ENCODE measurements at regions of chr17 and their contacts with region 1.

Region 1: GRCh38 chr17:44218344-44219107 is 949 bp downstream of the UBTF start:
- DNase-seq: peak; percentile 90 to 95 (median 92)
- ATAC-seq: peak; percentile 68 to 81 (median 73)
- H3K4me3 ChIP-seq: peak overlapping the region; percentile 76 to 100 (median 96)
- H3K27ac ChIP-seq: peak overlapping the region; percentile 97 to 100 (median 100)
- H3K4me1 ChIP-seq: peaks cover 4 to 44% (median 37%) of the 10 kb centered on the region in 12 donors
- H3K27me3 ChIP-seq: no peaks in the 10 kb centered on the region
- CTCF ChIP-seq: peak; percentile 57 to 88 (median 71)
- POLR2A ChIP-seq: peak in 1 of 2 donors; percentile 62

Region 2: GRCh38 chr17:44199553-44200477 is 18.7 kb before region 1 on chr17 and contains the start of gene ATXN7L3:
- intact Hi-C with region 1: loop called in 2 of 10 experiments (anchors 1 kb)
- DNase-seq: peak; percentile 99 to 100 (median 100)
- ATAC-seq: peak; percentile 91 to 96 (median 94)
- H3K4me3 ChIP-seq: peak within 1 kb of the TSS; percentile 55 to 99 (median 91)
- H3K27ac ChIP-seq: peak within 1 kb of the TSS; percentile 96 to 100 (median 98)
- H3K4me1 ChIP-seq: peaks cover 0 to 40% (median 17%) of the 10 kb centered on the region in 12 donors
- H3K27me3 ChIP-seq: no peaks in the 10 kb centered on the region
- CTCF ChIP-seq: no peak
- POLR2A ChIP-seq: peak in 1 of 2 donors; percentile 35
- total RNA-seq, gene ATXN7L3: 24.1 to 51.9 (median 35.3) TPM

Region 3: GRCh38 chr17:44258811-44259351 is 40.4 kb after region 1 on chr17:
- intact Hi-C with region 1: no loop called
- DNase-seq: no peak
- ATAC-seq: no peak
- H3K4me3 ChIP-seq: no peak overlapping the region
- H3K27ac ChIP-seq: no peak overlapping the region
- H3K4me1 ChIP-seq: no peaks in the 10 kb centered on the region
- H3K27me3 ChIP-seq: no peaks in the 10 kb centered on the region
- CTCF ChIP-seq: no peak
- POLR2A ChIP-seq: no peak

Region 4: GRCh38 chr17:44269535-44270240 is 51.2 kb after region 1 on chr17:
- intact Hi-C with region 1: loop called in 7 of 10 experiments (anchors 5 to 10 kb)
- DNase-seq: no peak
- ATAC-seq: no peak
- H3K4me3 ChIP-seq: no peak overlapping the region
- H3K27ac ChIP-seq: no peak overlapping the region
- H3K4me1 ChIP-seq: peaks cover 0 to 19% (median 12%) of the 10 kb centered on the region in 12 donors
- H3K27me3 ChIP-seq: no peaks in the 10 kb centered on the region
- CTCF ChIP-seq: no peak
- POLR2A ChIP-seq: no peak

Region 5: DNA sequence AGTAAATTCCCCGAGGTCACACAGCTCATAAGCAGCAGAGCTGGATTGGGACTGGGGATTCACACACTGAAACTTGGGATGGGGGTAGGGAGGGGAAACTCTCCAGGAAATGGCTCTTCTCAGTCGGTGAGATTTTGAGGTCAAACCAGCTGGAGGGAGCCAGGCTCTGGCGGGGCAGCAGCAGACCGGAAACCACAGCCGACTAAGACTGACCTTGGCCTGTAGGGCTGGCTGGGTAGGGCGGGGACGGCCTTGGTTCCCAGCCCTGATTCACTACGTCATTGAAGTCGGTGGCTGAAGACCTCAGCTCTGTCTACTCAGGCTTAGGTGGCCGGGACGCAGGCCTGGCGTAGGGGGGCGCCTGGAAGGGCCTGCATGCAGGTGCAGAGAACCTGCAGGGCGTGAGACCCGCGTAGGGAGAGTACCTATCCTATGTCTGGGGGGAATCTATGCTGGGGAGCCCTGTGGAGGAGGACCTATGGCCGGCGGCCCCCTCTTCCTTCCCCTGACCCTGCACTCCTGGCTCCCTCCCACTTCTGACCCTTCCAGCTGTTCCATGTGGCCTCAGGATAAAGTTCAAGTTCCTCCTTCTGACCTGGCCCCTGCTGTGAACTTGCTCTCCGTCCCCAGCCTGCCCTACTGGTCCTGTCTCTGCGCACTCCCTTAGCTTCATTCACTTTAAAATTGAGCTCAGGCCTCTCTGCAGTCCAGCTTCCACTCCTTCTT is 61.3 kb after region 1 on chr17:
- intact Hi-C with region 1: loop called in 6 of 10 experiments (anchors 10 kb)
- DNase-seq: peak; percentile 86 to 90 (median 88)
- ATAC-seq: peak; percentile 91 to 99 (median 98)
- H3K4me3 ChIP-seq: peak overlapping the region in 1 of 12 donors; percentile 28
- H3K27ac ChIP-seq: peak overlapping the region in 11 of 12 donors; percentile 51 to 89 (median 77)
- H3K4me1 ChIP-seq: peaks cover 0 to 23% (median 16%) of the 10 kb centered on the region in 12 donors
- H3K27me3 ChIP-seq: no peaks in the 10 kb centered on the region
- CTCF ChIP-seq: no peak
- POLR2A ChIP-seq: no peak

Region 6: DNA sequence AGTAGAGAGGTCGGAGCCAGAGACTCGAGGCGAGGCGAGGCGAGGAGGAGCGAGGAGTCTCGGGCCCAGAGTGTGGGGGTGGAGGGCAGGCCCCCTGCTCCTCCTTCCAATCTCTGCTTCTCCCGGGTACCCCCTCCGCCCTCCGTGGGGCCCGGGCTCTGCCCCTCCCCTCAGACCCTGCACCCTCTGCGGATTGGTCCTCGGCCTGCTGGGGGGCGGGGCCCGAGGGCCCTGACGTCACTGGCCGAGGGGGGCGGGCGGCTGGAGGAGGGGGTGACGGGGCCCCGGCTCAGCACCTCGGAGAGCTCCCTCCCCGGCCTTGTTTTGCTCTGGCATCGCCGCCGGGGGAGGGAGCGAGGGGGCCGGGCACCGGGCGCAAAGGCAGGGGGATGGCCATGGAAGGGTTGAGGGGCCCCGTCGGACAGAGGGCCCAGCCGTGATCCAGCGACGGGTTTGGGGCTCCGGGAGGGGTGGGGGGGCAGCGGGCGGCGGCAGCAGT is 89.8 kb after region 1 on chr17 and contains the start of gene RUNDC3A:
- intact Hi-C with region 1: loop called in 1 of 10 experiments (anchors 5 kb)
- DNase-seq: peak; percentile 88 to 92 (median 89)
- ATAC-seq: peak; percentile 95 to 99 (median 98)
- H3K4me3 ChIP-seq: peak within 1 kb of the TSS; percentile 27 to 62 (median 53)
- H3K27ac ChIP-seq: peak within 1 kb of the TSS in 4 of 12 donors; percentile 1 to 84 (median 37)
- H3K4me1 ChIP-seq: peaks cover 0 to 20% (median 16%) of the 10 kb centered on the region in 12 donors
- H3K27me3 ChIP-seq: peaks cover 0 to 24% (median 7%) of the 10 kb centered on the region in 9 donors
- CTCF ChIP-seq: no peak
- POLR2A ChIP-seq: no peak
- total RNA-seq, gene RUNDC3A: 0.27 to 1.3 (median 0.57) TPM in 8 of 9 donors, not detected in the other

Region 7: DNA sequence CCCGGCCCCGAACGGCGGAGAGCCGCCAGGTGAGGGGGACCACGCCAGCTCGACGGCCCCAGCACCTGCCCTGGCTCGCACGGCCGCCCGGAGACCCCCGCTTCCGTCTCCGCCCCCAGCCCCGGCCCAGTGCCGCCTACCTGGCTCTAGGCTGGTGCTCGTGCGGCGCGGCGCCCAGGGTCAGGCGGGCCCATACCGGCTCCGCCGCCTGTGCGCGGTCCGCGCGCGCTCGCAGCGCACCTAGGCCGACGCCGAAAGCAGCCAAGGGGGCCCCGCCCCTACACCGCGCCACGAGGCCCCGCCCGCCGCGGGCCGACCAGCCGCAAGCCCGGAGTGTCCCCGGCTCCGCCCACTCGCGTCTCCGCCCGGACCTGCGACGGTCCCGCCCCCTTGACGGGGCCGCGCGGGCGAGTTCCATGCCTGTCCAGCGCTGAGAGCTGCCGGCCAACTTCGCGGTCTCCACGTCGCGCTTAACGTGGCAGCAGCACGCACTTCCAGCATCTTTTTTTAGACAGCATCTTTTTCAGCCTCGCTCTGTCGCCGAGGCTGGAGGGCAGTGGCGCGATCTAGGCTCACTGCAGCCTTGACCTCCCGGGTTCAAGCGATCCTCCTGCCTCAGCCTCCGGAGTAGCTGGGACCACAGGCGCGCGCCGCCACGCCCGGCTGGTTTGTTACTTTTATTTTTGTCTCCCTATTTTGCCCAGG is 106.2 kb after region 1 on chr17 and contains the start of gene SLC25A39:
- intact Hi-C with region 1: loop called in 8 of 10 experiments (anchors 1 to 5 kb)
- DNase-seq: peak; percentile 95 to 99 (median 97)
- ATAC-seq: peak; percentile 86 to 92 (median 90)
- H3K4me3 ChIP-seq: peak within 1 kb of the TSS; percentile 82 to 99 (median 94)
- H3K27ac ChIP-seq: peak within 1 kb of the TSS; percentile 58 to 98 (median 95)
- H3K4me1 ChIP-seq: peaks cover 5 to 38% (median 22%) of the 10 kb centered on the region in 12 donors
- H3K27me3 ChIP-seq: no peaks in the 10 kb centered on the region
- CTCF ChIP-seq: no peak
- POLR2A ChIP-seq: peak in 1 of 2 donors; percentile 81
- total RNA-seq, gene SLC25A39: 37.2 to 78.5 (median 49.7) TPM

Region 8: DNA sequence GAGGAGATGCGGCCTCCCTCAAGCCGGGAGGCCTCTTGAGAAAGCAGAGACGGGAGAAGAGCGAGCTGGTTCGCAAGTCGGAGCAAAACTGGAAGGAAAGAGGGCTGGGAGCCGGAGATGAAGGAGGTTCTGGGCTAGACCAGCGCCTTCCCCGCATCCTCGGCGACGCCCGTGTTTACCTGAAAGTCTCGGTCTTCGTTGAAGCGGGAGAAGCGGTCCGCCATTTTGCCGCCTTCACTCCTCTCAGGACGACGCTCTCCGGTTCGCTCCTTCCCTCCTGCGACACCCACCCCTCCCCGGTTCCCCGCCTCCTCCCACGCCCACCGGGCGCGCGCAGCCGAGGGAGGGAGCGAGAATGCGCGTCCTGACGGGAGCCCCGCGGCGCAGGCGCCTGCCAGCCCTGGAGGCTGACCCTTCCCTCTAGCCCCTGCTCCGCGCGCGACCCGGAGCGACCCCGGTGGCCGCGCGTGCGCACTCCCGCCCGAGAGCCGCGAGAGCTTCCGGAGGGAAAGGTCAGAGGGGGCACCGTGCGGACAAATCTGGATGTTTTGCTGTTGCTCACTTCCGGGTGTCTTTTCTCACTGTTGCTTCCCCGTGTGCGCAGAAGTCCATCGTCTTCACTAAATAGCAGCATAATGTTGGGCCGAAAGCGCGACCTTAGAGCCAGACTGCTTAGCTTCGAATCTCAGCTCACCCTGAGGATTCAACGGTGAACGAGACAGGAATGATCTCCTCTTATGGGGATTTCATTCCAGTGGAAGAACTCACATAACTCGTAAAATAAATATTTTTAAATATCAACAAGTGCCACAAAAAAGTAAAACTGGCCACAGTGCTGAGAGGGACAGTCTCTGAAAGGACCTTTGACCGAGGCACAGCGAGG is 284.9 kb after region 1 on chr17 and contains the start of gene GPATCH8:
- intact Hi-C with region 1: loop called in 1 of 10 experiments (anchors 10 kb)
- DNase-seq: peak; percentile 94 to 98 (median 96)
- ATAC-seq: peak; percentile 98 to 99 (median 99)
- H3K4me3 ChIP-seq: peak within 1 kb of the TSS; percentile 69 to 99 (median 84)
- H3K27ac ChIP-seq: peak within 1 kb of the TSS; percentile 68 to 94 (median 90)
- H3K4me1 ChIP-seq: peaks cover 0 to 51% (median 33%) of the 10 kb centered on the region in 12 donors
- H3K27me3 ChIP-seq: peaks cover 0 to 9% (median 0%) of the 10 kb centered on the region in 9 donors
- CTCF ChIP-seq: no peak
- POLR2A ChIP-seq: peak; percentile 20 to 76
- total RNA-seq, gene GPATCH8: 17.5 to 24.9 (median 21.5) TPM

Measured in heart left ventricle (tissue), 16 donors.